ENCODE measurements at regions of chr6 and their contacts with region 1.

Region 1: GRCh38 chr6:27687154-27688013 is 214.5 kb upstream of the ZNF184 start:
- DNase-seq: peak; percentile 75
- H3K4me3 ChIP-seq: peak overlapping the region; percentile 33 to 77 (median 62)
- H3K27ac ChIP-seq: no peak overlapping the region
- H3K4me1 ChIP-seq: peaks cover 3% of the 10 kb centered on the region
- H3K27me3 ChIP-seq: peaks cover 0 to 2% of the 10 kb centered on the region in 2 experiments
- CTCF ChIP-seq: peak; percentile 57 to 75
- POLR2A ChIP-seq: no peak

Region 2: GRCh38 chr6:27295301-27296081 is 391.9 kb before region 1 on chr6:
- CTCF ChIA-PET with region 1: interaction called, 3 read pairs
- POLR2A ChIA-PET with region 1: no interaction called
- dilution Hi-C with region 1: no loop called
- intact Hi-C with region 1: loop called (anchors 5 kb)
- DNase-seq: peak; percentile 37
- H3K4me3 ChIP-seq: peak overlapping the region; percentile 18 to 80 (median 72)
- H3K27ac ChIP-seq: no peak overlapping the region
- H3K4me1 ChIP-seq: peaks cover 17% of the 10 kb centered on the region
- H3K27me3 ChIP-seq: peaks cover 16 to 20% of the 10 kb centered on the region in 2 experiments
- CTCF ChIP-seq: no peak
- POLR2A ChIP-seq: no peak

Region 3: DNA sequence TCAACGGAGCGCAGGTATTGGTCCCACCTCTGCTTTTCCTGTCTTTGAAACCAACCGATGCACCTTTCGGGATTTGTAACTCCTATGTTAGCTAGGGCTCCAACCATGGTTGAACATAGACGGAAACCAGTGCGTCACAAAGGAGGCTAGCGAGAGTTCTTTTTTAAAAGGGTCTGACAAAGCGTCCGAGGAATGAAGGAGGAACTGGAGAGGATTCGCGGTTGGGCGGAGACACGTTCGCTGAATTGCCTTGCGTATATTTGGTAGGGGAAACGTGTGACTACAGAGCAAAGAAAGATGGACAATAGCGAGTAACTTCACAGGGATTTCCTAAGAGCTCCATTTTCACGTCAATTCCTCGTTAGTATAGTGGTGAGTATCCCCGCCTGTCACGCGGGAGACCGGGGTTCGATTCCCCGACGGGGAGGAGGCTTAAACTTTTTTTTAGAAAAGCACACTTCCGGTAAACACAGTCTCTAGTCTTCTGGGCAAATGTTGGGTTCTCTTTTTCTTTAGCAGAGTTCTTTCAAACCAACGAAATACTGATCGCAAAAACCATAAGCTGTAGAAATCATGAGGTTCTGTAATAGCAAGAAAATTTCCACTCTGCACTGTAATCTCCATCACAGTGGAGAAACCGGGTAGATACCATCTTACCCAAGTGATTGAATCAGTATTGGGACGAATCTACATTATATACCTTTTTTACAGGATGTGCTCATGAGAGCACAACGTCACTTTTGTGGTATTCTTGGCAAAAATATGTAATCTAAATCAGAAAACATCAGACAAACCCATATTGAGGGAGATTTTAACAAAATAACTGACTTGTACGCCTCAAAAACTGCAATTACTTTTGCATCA is 207.8 kb before region 1 on chr6:
- CTCF ChIA-PET with region 1: no interaction called
- POLR2A ChIA-PET with region 1: no interaction called
- dilution Hi-C with region 1: no loop called
- intact Hi-C with region 1: loop called (anchors 1 kb)
- DNase-seq: peak; percentile 94
- H3K4me3 ChIP-seq: peak overlapping the region; percentile 78 to 93 (median 88)
- H3K27ac ChIP-seq: peak overlapping the region; percentile 82
- H3K4me1 ChIP-seq: peaks cover 7% of the 10 kb centered on the region
- H3K27me3 ChIP-seq: peaks cover 11 to 16% of the 10 kb centered on the region in 2 experiments
- CTCF ChIP-seq: no peak
- POLR2A ChIP-seq: no peak

Region 4: GRCh38 chr6:27545271-27546046 is 141.9 kb before region 1 on chr6:
- CTCF ChIA-PET with region 1: no interaction called
- POLR2A ChIA-PET with region 1: no interaction called
- dilution Hi-C with region 1: no loop called
- intact Hi-C with region 1: loop called (anchors 5 kb)
- DNase-seq: peak; percentile 43
- H3K4me3 ChIP-seq: peak overlapping the region; percentile 0 to 74 (median 73)
- H3K27ac ChIP-seq: no peak overlapping the region
- H3K4me1 ChIP-seq: peaks cover 13% of the 10 kb centered on the region
- H3K27me3 ChIP-seq: peaks cover 0 to 6% of the 10 kb centered on the region in 2 experiments
- CTCF ChIP-seq: no peak
- POLR2A ChIP-seq: no peak

Region 5: GRCh38 chr6:27601668-27602254 is 85.6 kb before region 1 on chr6:
- CTCF ChIA-PET with region 1: no interaction called
- POLR2A ChIA-PET with region 1: no interaction called
- dilution Hi-C with region 1: no loop called
- intact Hi-C with region 1: no loop called
- DNase-seq: no peak
- H3K4me3 ChIP-seq: peak overlapping the region in 1 of 3 experiments; percentile 9
- H3K27ac ChIP-seq: no peak overlapping the region
- H3K4me1 ChIP-seq: no peaks in the 10 kb centered on the region
- H3K27me3 ChIP-seq: peaks cover 0 to 11% of the 10 kb centered on the region in 2 experiments
- CTCF ChIP-seq: no peak
- POLR2A ChIP-seq: no peak

Region 6: DNA sequence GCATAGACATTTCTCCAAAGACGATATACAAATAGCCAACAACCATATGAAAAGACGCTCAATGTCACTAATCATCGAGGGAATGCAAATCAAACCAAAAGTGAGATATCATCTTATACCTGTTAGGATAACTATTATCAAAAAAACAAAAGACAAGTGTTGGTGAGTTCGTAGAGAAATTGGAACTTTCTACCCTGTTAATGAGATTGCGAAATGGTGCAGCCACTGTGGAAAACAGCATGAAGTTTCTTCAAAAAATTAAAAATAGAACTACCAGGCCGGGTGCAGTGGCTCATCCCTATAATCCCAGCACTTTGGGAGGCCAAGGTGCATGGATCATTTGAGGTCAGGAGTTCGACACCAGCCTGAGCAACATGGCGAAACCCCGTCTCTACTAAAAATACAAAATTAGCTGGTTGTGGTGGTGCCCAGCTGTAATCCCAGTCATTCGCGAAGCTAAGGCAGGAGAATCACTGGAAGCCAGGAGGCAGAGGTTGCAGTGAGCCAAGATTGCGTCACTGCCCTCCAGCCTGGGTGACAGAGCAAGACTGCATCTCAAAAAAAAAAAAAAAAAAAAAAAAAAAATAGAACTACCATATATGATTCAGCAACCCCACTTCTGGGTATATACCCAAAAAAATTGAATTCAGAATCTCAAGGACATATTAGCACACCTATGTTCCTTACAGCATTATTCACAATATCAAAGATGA is 44.5 kb before region 1 on chr6:
- CTCF ChIA-PET with region 1: no interaction called
- POLR2A ChIA-PET with region 1: no interaction called
- dilution Hi-C with region 1: no loop called
- intact Hi-C with region 1: no loop called
- DNase-seq: no peak
- H3K4me3 ChIP-seq: no peak overlapping the region
- H3K27ac ChIP-seq: no peak overlapping the region
- H3K4me1 ChIP-seq: no peaks in the 10 kb centered on the region
- H3K27me3 ChIP-seq: no peaks in the 10 kb centered on the region
- CTCF ChIP-seq: no peak
- POLR2A ChIP-seq: no peak

Region 7: DNA sequence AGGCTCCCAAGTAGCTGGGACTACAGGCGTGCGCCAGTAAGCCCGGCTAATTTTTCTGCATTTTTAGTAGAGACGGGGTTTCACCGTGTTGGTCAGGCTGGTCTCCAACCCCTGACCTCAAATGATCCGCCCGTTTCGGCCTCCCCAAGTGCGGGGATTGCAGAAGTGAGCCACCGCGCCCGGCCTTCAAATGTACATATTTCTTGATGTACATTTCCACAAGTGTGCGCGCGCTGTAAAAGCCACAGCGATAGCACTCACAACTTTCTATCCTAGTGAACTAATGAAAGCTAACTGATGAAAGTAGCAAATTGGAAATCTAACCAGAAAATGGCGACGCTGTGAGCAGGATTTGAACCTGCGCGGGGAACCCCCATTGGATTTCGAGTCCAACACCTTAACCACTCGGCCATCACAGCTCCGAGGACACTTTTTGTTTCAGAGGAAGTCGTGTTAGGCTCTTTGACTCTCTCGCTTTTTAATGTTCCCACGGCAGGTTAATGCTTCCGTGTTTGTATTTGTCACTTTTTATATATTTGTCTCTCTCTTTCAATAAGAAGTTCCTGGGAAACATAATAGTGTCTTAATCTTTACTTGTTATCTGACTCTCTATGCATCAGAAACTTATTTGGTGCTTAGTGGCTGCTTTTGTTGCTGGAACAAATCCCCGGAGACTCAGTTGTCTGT is 15.1 kb before region 1 on chr6:
- CTCF ChIA-PET with region 1: interaction called, 10 read pairs
- POLR2A ChIA-PET with region 1: no interaction called
- dilution Hi-C with region 1: no loop called
- intact Hi-C with region 1: no loop called
- DNase-seq: peak; percentile 40
- H3K4me3 ChIP-seq: no peak overlapping the region
- H3K27ac ChIP-seq: no peak overlapping the region
- H3K4me1 ChIP-seq: peaks cover 10% of the 10 kb centered on the region
- H3K27me3 ChIP-seq: peaks cover 7 to 11% of the 10 kb centered on the region in 2 experiments
- CTCF ChIP-seq: no peak
- POLR2A ChIP-seq: no peak

Measured in endothelial cell of umbilical vein (primary cell).